Activated CD4-positive, alpha-beta memory T cell treated with anti-CD3 and anti-CD28 coated beads for 36 hours (primary cell): ENCODE measurements at regions of chr2 and their contacts with region 1.

Region 1: GRCh38 chr2:8544786-8545694 is 136.8 kb upstream of the ID2 start:
- DNase-seq: peak; percentile 96
- H3K4me3 Mint-ChIP-seq: peak overlapping the region; percentile 52
- H3K27ac Mint-ChIP-seq: peak overlapping the region; percentile 100
- H3K4me1 Mint-ChIP-seq: peaks cover 72% of the 10 kb centered on the region
- H3K27me3 Mint-ChIP-seq: no peaks in the 10 kb centered on the region

Region 2: DNA sequence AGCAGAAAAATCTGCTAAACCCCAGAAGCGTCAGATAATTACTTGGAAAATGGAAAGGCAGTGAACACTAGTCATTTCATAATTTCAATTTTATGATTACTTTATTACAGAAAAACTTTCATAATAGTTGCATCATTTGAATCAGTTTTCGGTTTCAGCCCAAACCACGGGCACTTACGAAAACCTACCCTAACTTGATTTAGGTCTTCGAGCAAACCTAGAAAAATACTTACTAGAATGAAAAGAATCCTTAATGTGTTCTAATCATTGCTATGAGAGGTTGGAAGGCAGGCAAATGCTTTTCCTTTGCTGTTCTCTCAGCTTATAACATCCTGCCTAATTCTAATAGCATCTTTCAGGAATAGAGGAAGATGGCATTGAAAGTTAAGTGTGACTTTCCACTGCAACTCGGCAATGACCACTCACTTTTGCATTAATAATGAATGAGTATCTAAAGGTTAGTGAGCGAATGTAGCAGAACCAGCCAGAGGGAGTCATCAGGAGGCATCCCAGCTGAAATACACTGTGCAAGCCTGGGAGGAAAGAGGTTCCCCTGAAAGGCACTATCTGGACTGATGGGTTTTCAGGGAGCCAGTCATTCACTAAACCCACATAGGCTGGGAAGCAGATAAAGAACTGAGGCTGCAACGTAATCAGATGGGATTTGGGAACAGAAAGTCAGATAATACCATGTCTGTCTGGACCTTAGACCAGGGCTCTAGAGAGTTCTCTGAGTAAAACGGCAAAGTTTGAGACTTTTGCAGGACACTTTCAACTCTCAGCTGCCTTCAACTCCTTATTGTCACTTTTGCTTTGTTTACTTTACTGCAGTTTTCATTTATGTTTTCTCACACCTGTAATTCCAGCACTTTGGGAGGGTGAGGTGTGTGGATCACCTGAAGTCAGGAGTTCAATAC is 1107.1 kb before region 1 on chr2:
- CTCF ChIA-PET with region 1: no interaction called
- POLR2A ChIA-PET with region 1: no interaction called
- intact Hi-C with region 1: loop called (anchors 5 kb)
- DNase-seq: peak; percentile 65
- H3K4me3 Mint-ChIP-seq: peak overlapping the region; percentile 29
- H3K27ac Mint-ChIP-seq: peak overlapping the region; percentile 91
- H3K4me1 Mint-ChIP-seq: peaks cover 74% of the 10 kb centered on the region
- H3K27me3 Mint-ChIP-seq: peaks cover 7% of the 10 kb centered on the region

Region 3: GRCh38 chr2:7845332-7845731 is 699.7 kb before region 1 on chr2:
- CTCF ChIA-PET with region 1: no interaction called
- POLR2A ChIA-PET with region 1: no interaction called
- intact Hi-C with region 1: loop called (anchors 1 kb)
- DNase-seq: no peak
- H3K4me3 Mint-ChIP-seq: no peak overlapping the region
- H3K27ac Mint-ChIP-seq: no peak overlapping the region
- H3K4me1 Mint-ChIP-seq: peaks cover 36% of the 10 kb centered on the region
- H3K27me3 Mint-ChIP-seq: peaks cover 7% of the 10 kb centered on the region

Region 4: DNA sequence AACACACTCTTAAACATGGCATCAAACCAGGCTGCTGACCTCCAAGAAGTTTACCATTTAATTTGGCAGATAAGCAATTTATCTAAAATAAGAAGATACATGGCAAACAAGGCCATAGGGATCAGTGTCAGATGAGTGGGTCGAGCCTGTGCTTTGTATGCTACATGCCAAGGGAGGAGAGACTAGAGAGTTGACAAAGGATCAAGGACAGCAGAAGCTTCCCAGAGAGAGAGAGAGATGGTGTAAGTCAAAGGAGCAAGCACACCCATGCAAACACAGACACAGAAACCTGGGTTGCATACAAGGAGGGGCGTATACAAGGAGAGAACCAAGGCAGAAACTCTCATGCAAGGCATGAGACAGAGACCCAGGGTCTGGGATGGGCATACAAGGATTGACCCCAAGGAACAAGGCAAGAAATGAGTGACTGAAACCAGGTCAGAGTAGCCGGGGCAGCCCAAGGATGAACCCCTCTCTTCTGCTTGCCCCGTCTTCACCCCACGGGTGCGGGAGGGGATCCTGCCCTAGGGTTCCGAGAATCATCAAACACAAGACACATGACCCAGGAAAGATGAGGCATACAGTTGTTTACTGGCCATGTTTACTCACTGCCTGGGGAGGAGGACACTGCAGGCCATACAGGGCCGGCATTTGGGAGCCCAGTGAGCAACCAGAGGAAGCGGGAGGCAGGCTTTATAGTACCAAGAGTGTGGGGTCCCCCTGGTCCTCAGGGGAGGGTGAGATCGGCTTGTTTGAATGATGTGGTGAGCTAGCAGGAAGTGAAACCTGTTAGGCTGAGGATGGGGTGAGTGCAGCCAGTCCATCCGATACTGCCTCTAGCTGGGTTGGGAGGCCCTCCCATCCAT is 392.4 kb before region 1 on chr2:
- CTCF ChIA-PET with region 1: interaction called, 3 read pairs
- POLR2A ChIA-PET with region 1: interaction called, 6 read pairs
- intact Hi-C with region 1: loop called (anchors 1 kb)
- DNase-seq: no peak
- H3K4me3 Mint-ChIP-seq: no peak overlapping the region
- H3K27ac Mint-ChIP-seq: no peak overlapping the region
- H3K4me1 Mint-ChIP-seq: peaks cover 28% of the 10 kb centered on the region
- H3K27me3 Mint-ChIP-seq: no peaks in the 10 kb centered on the region

Region 5: GRCh38 chr2:8456151-8456845 is 88.7 kb before region 1 on chr2:
- CTCF ChIA-PET with region 1: interaction called, 4 read pairs
- POLR2A ChIA-PET with region 1: interaction called, 12 read pairs
- intact Hi-C with region 1: no loop called
- DNase-seq: peak; percentile 73
- H3K4me3 Mint-ChIP-seq: peak overlapping the region; percentile 68
- H3K27ac Mint-ChIP-seq: peak overlapping the region; percentile 80
- H3K4me1 Mint-ChIP-seq: peaks cover 43% of the 10 kb centered on the region
- H3K27me3 Mint-ChIP-seq: no peaks in the 10 kb centered on the region

Region 6: DNA sequence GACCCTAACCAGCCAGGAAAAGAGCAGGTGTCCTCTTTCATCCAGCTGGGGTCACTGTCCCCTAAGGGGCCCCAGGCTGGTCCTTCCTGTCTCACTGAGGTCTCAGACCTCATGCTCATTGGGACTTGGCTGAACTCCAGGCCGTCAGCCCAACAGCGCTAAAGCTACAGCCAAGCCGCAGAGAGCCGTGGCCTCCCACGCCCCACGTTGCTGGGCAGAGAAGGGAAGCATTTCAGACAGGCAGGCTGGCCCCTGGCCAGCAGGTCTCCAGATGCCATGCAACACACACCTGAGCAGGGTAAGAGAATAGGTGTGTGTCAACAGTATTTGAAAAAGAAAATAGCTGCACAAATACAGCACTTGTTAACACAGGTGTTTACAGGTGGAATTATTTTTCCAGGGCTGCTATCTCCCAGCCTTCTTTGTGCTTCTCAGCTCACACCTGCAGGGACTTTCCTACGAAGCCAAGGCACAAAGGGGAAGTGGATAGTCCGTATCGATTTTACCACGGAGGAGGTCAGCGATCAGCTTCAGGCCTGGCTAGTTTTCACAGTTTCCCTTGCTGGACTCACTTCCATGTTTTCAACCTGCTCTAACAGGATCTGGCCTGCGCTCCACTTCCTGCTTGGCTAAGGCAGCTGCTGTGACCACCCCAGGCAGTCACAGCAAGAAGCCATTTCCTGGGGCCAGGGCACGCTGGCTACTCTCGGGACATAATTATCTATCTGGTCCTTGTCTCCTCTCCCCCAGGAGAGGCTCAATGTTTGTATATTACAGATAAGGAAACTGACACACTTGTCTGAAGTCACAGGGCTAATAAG is 19.2 kb before region 1 on chr2:
- CTCF ChIA-PET with region 1: interaction called, 11 read pairs
- POLR2A ChIA-PET with region 1: interaction called, 63 read pairs
- intact Hi-C with region 1: loop called (anchors 1 kb)
- DNase-seq: no peak
- H3K4me3 Mint-ChIP-seq: no peak overlapping the region
- H3K27ac Mint-ChIP-seq: no peak overlapping the region
- H3K4me1 Mint-ChIP-seq: peaks cover 30% of the 10 kb centered on the region
- H3K27me3 Mint-ChIP-seq: no peaks in the 10 kb centered on the region

Region 7: DNA sequence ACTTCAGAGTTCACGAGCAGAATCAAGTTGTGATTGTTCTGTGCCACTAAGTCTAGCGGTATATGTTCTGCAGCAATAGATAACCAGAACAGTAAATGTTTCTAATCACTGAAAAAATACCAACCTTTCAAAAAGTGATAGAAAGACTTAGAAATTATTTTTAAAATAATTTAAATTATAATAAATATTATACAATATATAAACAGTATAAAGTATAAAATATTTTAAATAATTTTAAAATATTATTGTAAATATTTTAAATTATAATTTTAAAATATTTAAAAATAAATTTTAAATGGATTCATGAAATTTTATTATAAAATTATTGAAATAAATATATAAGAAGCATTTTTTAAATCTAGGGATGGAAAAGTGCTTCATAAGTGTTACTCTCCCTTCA is 10.5 kb after region 1 on chr2:
- CTCF ChIA-PET with region 1: no interaction called
- POLR2A ChIA-PET with region 1: no interaction called
- intact Hi-C with region 1: no loop called
- DNase-seq: no peak
- H3K4me3 Mint-ChIP-seq: no peak overlapping the region
- H3K27ac Mint-ChIP-seq: no peak overlapping the region
- H3K4me1 Mint-ChIP-seq: peaks cover 12% of the 10 kb centered on the region
- H3K27me3 Mint-ChIP-seq: no peaks in the 10 kb centered on the region